Sigmoid colon (tissue), 7 donors: ENCODE measurements at regions of chr20 and their contacts with region 1.

Region 1: GRCh38 chr20:25623736-25624499 is at the start of gene NANP:
- DNase-seq: peak; percentile 99
- H3K4me3 ChIP-seq: peak within 1 kb of the TSS; percentile 68 to 98 (median 78)
- H3K27ac ChIP-seq: peak within 1 kb of the TSS; percentile 83 to 97 (median 92)
- H3K4me1 ChIP-seq: peaks cover 0 to 28% (median 13%) of the 10 kb centered on the region in 4 donors
- H3K27me3 ChIP-seq: no peaks in the 10 kb centered on the region
- CTCF ChIP-seq: no peak
- EP300 ChIP-seq: peak in 1 of 4 donors; percentile 30
- POLR2A ChIP-seq: peak; percentile 52 to 65
- total RNA-seq, gene NANP: 3.9 to 5.7 (median 4.8) TPM

Region 2: DNA sequence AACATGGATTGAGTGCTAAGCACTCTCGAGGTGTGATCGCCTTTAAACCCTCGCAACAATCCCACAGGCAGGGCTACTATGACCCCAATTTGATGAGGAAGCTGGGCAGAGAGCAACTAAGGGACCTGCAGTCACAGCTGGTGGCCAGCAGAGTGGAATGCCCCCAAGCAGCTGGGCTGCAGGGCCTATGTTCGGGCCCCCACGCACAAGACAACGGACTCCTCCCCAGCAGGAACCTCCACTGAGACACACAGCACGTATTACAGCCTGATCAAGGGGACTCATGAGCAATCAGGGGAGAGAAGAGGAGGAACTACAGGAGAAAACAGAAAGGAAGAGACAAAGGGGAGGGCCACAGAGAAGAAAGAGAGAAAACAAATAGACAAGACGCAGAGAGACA is 653.2 kb before region 1 on chr20:
- intact Hi-C with region 1: no loop called
- DNase-seq: peak; percentile 32
- H3K4me3 ChIP-seq: no peak overlapping the region
- H3K27ac ChIP-seq: no peak overlapping the region
- H3K4me1 ChIP-seq: no peaks in the 10 kb centered on the region
- H3K27me3 ChIP-seq: no peaks in the 10 kb centered on the region
- CTCF ChIP-seq: no peak
- EP300 ChIP-seq: no peak
- POLR2A ChIP-seq: no peak

Region 3: GRCh38 chr20:25532119-25532751 is 91.7 kb before region 1 on chr20:
- intact Hi-C with region 1: loop called (anchors 2 kb)
- DNase-seq: no peak
- H3K4me3 ChIP-seq: peak overlapping the region in 2 of 4 donors; percentile 26 to 28
- H3K27ac ChIP-seq: peak overlapping the region in 3 of 4 donors; percentile 64 to 80 (median 77)
- H3K4me1 ChIP-seq: peaks cover 0 to 33% (median 25%) of the 10 kb centered on the region in 4 donors
- H3K27me3 ChIP-seq: no peaks in the 10 kb centered on the region
- CTCF ChIP-seq: peak in 1 of 4 experiments; percentile 30
- EP300 ChIP-seq: no peak
- POLR2A ChIP-seq: no peak

Region 4: GRCh38 chr20:25584905-25585704 is 38.8 kb before region 1 on chr20 and contains the start of gene NINL:
- intact Hi-C with region 1: loop called (anchors 1 kb)
- DNase-seq: peak; percentile 78
- H3K4me3 ChIP-seq: peak within 1 kb of the TSS; percentile 79 to 84 (median 82)
- H3K27ac ChIP-seq: peak within 1 kb of the TSS; percentile 80 to 81 (median 80)
- H3K4me1 ChIP-seq: peaks cover 0 to 26% (median 16%) of the 10 kb centered on the region in 4 donors
- H3K27me3 ChIP-seq: no peaks in the 10 kb centered on the region
- CTCF ChIP-seq: no peak
- EP300 ChIP-seq: no peak
- POLR2A ChIP-seq: peak in 1 of 2 donors; percentile 21
- total RNA-seq, gene NINL: 9.6 to 19.9 (median 12.8) TPM

Region 5: DNA sequence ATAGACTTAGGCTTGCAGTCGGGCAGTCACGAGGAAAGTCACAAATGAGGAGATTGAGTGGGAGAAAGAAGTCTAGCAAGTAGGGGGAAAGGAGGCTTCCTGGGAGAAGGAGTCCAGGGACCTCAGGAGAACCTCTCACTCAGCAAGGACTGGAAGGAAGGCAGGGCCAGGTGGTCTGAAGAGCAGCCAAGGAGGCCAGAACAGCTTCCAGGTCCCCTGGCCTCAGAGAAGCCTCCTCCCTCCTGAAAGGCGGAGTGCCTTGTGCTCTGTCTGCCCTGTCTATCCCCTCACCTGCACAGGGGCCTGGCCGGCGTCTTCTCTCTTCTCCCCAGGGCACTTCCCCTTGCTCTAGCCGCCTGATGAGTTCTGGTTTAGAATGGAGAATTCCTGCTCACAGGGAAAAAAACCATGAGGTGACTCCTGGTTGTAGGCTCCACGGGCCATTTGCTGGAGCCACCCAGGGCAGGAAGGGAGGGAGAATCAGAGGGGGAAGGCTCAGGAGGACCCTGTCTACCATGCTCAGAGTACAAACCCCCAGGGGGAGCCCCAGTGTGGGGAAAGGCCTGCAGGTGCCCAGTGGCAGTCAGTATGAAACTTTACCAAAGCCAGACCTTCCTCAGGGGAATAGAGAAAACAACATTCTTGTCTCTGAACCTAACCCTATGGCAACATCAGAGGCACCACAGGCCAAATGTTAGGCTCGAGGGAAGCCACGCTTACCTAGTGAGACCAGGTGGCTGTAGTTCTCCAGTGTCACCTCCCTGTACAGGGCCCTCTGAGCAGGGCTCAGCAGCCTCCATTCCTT is 61.6 kb after region 1 on chr20:
- intact Hi-C with region 1: loop called (anchors 2 kb)
- DNase-seq: no peak
- H3K4me3 ChIP-seq: no peak overlapping the region
- H3K27ac ChIP-seq: no peak overlapping the region
- H3K4me1 ChIP-seq: peaks cover 0 to 8% (median 0%) of the 10 kb centered on the region in 4 donors
- H3K27me3 ChIP-seq: no peaks in the 10 kb centered on the region
- CTCF ChIP-seq: no peak
- EP300 ChIP-seq: no peak
- POLR2A ChIP-seq: no peak